ENCODE measurements at regions of chr19 and their contacts with region 1.

Region 1: GRCh38 chr19:34171877-34172660 is at the start of gene LSM14A:
- DNase-seq: peak; percentile 90
- H3K4me3 Mint-ChIP-seq: peak within 1 kb of the TSS; percentile 100
- H3K27ac Mint-ChIP-seq: peak within 1 kb of the TSS; percentile 100
- H3K4me1 Mint-ChIP-seq: peaks cover 39% of the 10 kb centered on the region
- H3K27me3 Mint-ChIP-seq: peaks cover 5% of the 10 kb centered on the region
- total RNA-seq, gene LSM14A: 118 and 121 TPM in 2 replicates

Region 2: GRCh38 chr19:33373701-33374421 is 798.2 kb before region 1 on chr19 and contains the start of gene CEBPG:
- intact Hi-C with region 1: loop called (anchors 5 kb)
- DNase-seq: peak; percentile 60
- H3K4me3 Mint-ChIP-seq: peak within 1 kb of the TSS; percentile 93
- H3K27ac Mint-ChIP-seq: peak within 1 kb of the TSS; percentile 69
- H3K4me1 Mint-ChIP-seq: peaks cover 39% of the 10 kb centered on the region
- H3K27me3 Mint-ChIP-seq: no peaks in the 10 kb centered on the region
- total RNA-seq, gene CEBPG: 30.4 and 31.3 TPM in 2 replicates

Region 3: GRCh38 chr19:34134190-34135053 is 37.6 kb before region 1 on chr19:
- intact Hi-C with region 1: loop called (anchors 1 kb)
- DNase-seq: peak; percentile 83
- H3K4me3 Mint-ChIP-seq: peak overlapping the region; percentile 88
- H3K27ac Mint-ChIP-seq: peak overlapping the region; percentile 77
- H3K4me1 Mint-ChIP-seq: no peaks in the 10 kb centered on the region
- H3K27me3 Mint-ChIP-seq: peaks cover 10% of the 10 kb centered on the region

Region 4: GRCh38 chr19:34232566-34233481 is 60.8 kb after region 1 on chr19:
- intact Hi-C with region 1: loop called (anchors 2 kb)
- DNase-seq: peak; percentile 5
- H3K4me3 Mint-ChIP-seq: peak overlapping the region; percentile 62
- H3K27ac Mint-ChIP-seq: peak overlapping the region; percentile 76
- H3K4me1 Mint-ChIP-seq: peaks cover 31% of the 10 kb centered on the region
- H3K27me3 Mint-ChIP-seq: no peaks in the 10 kb centered on the region

Region 5: DNA sequence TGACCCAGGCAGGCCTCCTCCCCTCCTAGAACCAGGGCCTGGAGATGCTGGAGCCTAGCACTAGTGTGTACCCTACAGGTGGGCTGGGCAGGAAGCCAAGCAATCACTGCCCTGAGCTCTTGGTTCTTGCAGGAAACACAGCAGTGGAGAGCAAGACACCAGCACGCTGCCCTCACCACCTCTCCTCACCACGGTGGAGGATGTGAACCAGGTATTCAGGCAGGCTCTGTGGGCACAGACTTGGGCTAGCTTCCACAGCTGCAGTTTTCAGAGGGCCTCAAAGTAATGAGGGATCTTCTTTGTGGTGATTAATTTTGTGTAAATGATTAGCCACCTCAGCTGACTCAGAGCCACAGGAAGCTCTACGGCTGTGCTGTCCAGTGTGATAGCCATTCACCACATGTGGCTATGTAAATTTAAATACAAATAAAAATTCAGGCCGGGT is 179.3 kb after region 1 on chr19:
- intact Hi-C with region 1: loop called (anchors 1 kb)
- DNase-seq: peak; percentile 11
- H3K4me3 Mint-ChIP-seq: peak overlapping the region; percentile 47
- H3K27ac Mint-ChIP-seq: peak overlapping the region; percentile 80
- H3K4me1 Mint-ChIP-seq: peaks cover 29% of the 10 kb centered on the region
- H3K27me3 Mint-ChIP-seq: no peaks in the 10 kb centered on the region

Region 6: DNA sequence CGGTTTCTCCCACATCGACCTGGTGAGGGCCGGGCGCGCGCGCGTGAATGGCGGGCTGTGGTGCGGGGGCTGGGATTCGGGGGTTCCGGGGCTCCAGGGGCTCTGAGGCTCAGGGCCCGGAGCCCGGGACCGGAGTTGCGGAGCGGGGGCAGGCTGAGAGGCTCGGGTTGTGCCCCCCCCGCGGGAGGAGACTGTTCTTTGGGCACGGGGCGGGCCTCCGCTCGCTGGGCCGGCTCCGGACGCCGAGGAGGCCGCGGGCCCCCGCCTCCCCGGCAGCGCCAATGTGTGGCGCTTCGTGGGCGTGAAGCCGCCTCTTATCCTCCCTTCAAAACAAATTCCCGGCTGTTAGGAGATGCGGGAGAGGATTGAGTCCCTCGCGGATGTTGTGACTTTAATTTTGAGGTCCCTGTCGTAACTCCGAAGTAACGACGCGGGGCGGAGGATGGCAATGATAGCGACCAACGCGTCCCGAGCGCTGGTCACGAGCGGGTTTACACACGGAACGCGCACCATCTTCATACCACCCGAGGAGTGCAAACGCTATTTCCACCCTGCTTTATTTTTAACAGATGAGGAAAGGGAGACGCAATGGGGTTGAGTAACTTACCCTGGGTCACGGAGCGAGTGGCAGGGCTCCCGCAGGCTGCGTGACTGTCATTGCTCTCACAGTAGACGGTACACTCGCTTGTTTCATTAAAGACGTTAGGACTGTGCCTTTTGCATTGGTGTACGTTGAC is 256.6 kb after region 1 on chr19:
- intact Hi-C with region 1: loop called (anchors 5 kb)
- DNase-seq: peak; percentile 31
- H3K4me3 Mint-ChIP-seq: peak overlapping the region; percentile 98
- H3K27ac Mint-ChIP-seq: peak overlapping the region; percentile 95
- H3K4me1 Mint-ChIP-seq: peaks cover 45% of the 10 kb centered on the region
- H3K27me3 Mint-ChIP-seq: no peaks in the 10 kb centered on the region